ENCODE measurements at regions of chr20 and their contacts with region 1.

Region 1: DNA sequence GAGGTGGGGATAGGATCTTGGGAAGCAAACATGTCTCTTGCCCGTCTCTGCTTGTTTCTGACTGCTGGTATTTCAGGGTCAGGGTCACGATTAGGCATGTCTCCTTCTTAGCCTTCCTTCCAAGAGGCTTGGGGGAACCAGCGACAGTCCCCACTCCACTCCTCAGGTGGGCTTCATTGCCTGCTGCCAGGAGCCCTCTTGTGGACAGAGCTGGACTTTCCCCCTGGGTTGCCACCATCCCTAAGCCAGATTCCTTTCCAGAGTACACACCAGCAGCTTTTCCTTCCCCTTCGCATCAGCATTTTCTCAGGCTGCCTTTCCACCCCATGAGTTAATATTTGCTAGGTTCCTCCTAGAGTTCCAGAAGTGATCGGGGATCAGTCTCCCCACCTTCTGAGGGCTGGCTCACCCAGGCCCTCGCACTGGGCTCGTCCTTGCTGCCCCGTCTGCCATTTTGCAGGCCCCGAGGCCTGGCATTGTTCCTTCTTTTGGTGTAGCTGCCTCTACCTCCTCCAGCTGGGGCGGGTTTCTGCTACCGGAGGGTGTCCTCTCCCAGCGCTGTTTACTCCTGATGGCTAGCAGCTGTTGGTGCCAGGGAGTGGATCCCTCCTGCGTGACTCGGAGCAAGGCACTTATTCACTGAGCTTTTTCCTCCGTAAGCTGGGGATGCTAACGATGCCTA is 8.8 kb upstream of the C20orf144 start:
- DNase-seq: no peak
- H3K4me3 ChIP-seq: no peak overlapping the region
- CTCF ChIP-seq: peak; percentile 93

Region 2: GRCh38 chr20:33408716-33409654 is 244.4 kb before region 1 on chr20:
- CTCF ChIA-PET with region 1: no interaction called
- POLR2A ChIA-PET with region 1: no interaction called
- DNase-seq: no peak
- H3K4me3 ChIP-seq: no peak overlapping the region
- CTCF ChIP-seq: no peak

Region 3: DNA sequence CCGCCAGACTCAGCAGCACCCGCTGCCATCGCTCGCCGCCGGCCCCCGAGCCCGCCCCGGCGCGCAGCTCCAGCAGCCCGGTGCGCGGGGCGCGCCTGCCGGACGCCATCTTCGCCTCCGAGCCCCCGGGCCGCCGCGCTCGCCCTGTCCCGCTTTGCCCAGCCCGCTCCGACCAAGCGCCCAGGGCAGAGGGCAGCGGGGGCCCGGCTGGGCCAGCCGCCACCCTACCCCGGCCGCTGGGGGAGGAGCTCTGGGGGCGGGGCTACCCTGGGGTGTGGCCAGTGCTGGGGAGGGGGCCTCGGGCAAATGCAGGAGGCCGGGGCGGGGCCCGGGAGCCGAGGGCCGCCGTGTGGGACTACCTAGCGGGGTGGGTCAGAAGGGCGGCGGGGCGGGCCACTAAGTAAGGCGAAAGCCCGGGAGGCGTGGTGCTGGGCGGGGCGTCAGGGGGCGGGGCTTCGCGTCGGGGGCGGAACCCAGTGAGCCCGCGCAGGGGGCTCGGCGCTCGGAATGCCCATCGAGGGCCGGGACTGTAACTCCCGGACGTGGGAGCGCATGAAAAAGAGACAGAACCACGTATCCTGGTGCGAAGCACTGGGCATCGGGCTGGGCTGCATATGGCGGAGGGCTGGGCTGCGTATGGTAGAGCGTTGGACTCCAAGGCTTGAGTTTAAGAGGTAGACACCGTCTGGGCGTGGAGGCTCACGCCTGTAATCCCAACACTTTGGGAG is 209.7 kb before region 1 on chr20 and contains the start of gene SNTA1:
- CTCF ChIA-PET with region 1: interaction called, 22 read pairs
- POLR2A ChIA-PET with region 1: no interaction called
- DNase-seq: no peak
- H3K4me3 ChIP-seq: peak within 1 kb of the TSS; percentile 71
- CTCF ChIP-seq: no peak

Region 4: GRCh38 chr20:33450867-33451266 is 202.5 kb before region 1 on chr20:
- CTCF ChIA-PET with region 1: interaction called, 28 read pairs
- POLR2A ChIA-PET with region 1: no interaction called
- DNase-seq: no peak
- H3K4me3 ChIP-seq: no peak overlapping the region
- CTCF ChIP-seq: no peak

Region 5: GRCh38 chr20:33460711-33461110 is 192.6 kb before region 1 on chr20:
- CTCF ChIA-PET with region 1: interaction called, 33 read pairs
- POLR2A ChIA-PET with region 1: no interaction called
- DNase-seq: no peak
- H3K4me3 ChIP-seq: no peak overlapping the region
- CTCF ChIP-seq: no peak

Region 6: DNA sequence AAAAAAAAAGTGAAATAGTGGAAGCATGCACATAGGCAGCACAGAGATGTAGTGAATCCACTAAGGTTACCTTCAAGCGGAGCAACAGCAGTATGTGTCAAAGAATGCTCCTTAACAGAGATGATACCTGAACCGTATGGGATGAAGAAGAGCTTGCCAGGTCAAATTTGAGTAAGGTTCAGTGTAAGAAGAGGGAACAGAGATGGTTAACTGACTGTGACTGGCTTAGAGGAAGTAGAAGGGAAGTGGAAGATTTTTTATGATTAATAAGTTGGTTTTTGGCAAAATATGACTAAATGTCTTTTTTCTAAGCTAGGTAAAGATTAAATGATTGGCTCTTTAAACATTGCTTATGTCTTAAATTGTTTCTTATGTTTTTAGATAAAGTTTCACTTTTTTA is 43.9 kb before region 1 on chr20:
- CTCF ChIA-PET with region 1: no interaction called
- POLR2A ChIA-PET with region 1: no interaction called
- DNase-seq: no peak
- H3K4me3 ChIP-seq: no peak overlapping the region
- CTCF ChIP-seq: no peak

Measured in AG04449 (cell line).